ENCODE measurements at regions of chr1 and their contacts with region 1.

Region 1: GRCh38 chr1:116426401-116426800 is 53.4 kb downstream of the ATP1A1 start:
- DNase-seq: no peak
- H3K4me3 ChIP-seq: no peak overlapping the region
- H3K27ac ChIP-seq: no peak overlapping the region
- H3K4me1 ChIP-seq: peaks cover 11% of the 10 kb centered on the region
- H3K27me3 ChIP-seq: no peaks in the 10 kb centered on the region
- CTCF ChIP-seq: no peak
- EP300 ChIP-seq: no peak
- POLR2A ChIP-seq: no peak

Region 2: DNA sequence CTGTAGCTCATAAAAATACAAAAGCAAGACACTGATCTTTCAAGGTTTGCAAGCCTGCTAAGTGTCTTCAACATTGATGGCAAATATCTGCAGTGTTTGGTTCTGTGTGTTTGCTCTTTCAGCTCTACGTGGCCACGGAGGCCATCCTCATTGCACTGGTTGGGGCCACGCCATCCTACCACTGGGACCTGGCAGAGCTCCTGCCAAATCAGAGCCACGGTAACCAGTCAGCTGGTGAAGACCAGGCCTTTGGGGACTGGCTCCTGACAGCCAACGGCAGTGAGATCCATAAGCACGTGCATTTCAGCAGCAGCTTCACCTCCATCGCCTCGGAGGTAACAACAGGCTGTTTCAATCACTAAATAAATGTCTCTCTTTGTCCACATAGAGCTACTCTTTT is 434.5 kb before region 1 on chr1:
- intact Hi-C with region 1: no loop called
- DNase-seq: no peak
- H3K4me3 ChIP-seq: no peak overlapping the region
- H3K27ac ChIP-seq: no peak overlapping the region
- H3K4me1 ChIP-seq: no peaks in the 10 kb centered on the region
- H3K27me3 ChIP-seq: no peaks in the 10 kb centered on the region
- CTCF ChIP-seq: no peak
- EP300 ChIP-seq: no peak
- POLR2A ChIP-seq: no peak

Region 3: DNA sequence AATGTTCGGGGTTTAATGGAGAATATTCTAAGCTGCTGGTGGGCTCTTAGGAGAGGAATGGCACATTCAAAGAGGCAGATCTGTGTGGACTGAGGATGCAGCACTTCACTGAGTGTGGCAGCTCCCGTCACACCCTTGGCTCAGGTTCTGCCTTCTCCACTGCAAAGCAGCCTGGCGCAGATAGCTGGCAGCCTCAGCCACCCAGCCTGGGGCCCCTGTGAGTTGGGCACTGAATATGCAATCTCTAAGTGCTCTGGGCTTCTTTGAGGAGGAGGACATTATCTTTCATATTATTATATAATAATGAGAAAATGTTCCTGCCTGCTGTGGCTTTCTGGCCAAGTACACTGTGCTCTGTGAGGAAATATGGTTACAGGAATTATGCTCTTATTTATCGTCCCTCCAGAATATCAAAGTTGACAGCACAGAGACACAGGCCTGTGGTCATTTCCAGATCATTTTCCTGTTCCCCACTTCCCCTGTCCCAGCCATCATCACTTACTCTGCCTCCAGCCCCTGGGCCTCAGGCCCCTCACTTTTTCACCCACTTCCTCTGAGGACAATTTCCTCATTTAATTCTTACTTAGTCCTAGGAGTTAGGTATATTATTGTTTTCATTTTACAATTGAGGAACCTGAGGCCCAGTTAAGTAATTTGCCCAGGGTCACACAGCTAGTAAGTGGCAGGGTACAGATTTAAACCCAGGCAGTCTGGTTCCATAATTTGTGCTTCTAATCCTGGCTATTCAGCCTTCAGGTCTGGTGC is 261.6 kb before region 1 on chr1:
- intact Hi-C with region 1: loop called in 1 of 4 experiments (anchors 5 kb)
- DNase-seq: no peak
- H3K4me3 ChIP-seq: no peak overlapping the region
- H3K27ac ChIP-seq: no peak overlapping the region
- H3K4me1 ChIP-seq: no peaks in the 10 kb centered on the region
- H3K27me3 ChIP-seq: no peaks in the 10 kb centered on the region
- CTCF ChIP-seq: no peak
- EP300 ChIP-seq: no peak
- POLR2A ChIP-seq: no peak

Measured in ovary (tissue), 10 donors.